ENCODE measurements at regions of chr5 and their contacts with region 1.

Region 1: GRCh38 chr5:23494538-23494937 is 12.9 kb upstream of the PRDM9 start:
- DNase-seq: no peak
- H3K4me3 ChIP-seq: no peak overlapping the region
- H3K27ac ChIP-seq: no peak overlapping the region
- H3K4me1 ChIP-seq: no peaks in the 10 kb centered on the region
- H3K27me3 ChIP-seq: no peaks in the 10 kb centered on the region
- CTCF ChIP-seq: no peak
- EP300 ChIP-seq: no peak
- POLR2A ChIP-seq: no peak

Region 2: GRCh38 chr5:23727246-23727645 is 232.7 kb after region 1 on chr5:
- in situ Hi-C with region 1: no loop called
- intact Hi-C with region 1: no loop called
- DNase-seq: no peak
- H3K4me3 ChIP-seq: no peak overlapping the region
- H3K27ac ChIP-seq: no peak overlapping the region
- H3K4me1 ChIP-seq: no peaks in the 10 kb centered on the region
- H3K27me3 ChIP-seq: no peaks in the 10 kb centered on the region
- CTCF ChIP-seq: no peak
- EP300 ChIP-seq: no peak
- POLR2A ChIP-seq: no peak

Region 3: GRCh38 chr5:25091921-25092320 is 1597.4 kb after region 1 on chr5:
- in situ Hi-C with region 1: no loop called
- intact Hi-C with region 1: loop called (anchors 10 kb)
- DNase-seq: no peak
- H3K4me3 ChIP-seq: no peak overlapping the region
- H3K27ac ChIP-seq: no peak overlapping the region
- H3K4me1 ChIP-seq: no peaks in the 10 kb centered on the region
- H3K27me3 ChIP-seq: no peaks in the 10 kb centered on the region
- CTCF ChIP-seq: no peak
- EP300 ChIP-seq: no peak
- POLR2A ChIP-seq: no peak

Measured in transverse colon (tissue), 4 donors.